ENCODE measurements at regions of chr5 and their contacts with region 1.

Region 1: GRCh38 chr5:80466669-80467485 is 21.0 kb upstream of the FAM151B start:
- DNase-seq: peak; percentile 71
- H3K27ac ChIP-seq: no peak overlapping the region
- CTCF ChIP-seq: no peak

Region 2: DNA sequence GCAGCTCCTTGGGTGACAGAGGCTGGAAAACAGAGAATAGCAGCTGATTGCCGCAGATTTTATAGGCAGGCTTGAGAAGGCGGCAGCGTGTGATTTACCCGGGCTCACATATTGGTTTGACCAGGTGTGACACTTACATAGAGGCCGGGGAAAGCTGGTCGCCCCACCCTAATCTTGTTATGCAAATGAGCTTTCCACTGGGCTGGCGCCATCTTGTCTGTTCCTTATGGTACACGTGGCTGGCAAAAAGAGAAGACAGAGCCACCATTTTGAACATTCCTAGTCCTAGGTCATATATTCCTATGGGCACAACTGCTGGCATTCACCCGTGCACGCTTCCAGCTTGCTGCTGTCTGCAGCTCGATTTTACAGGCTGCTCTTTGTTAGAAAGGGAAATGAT is 158.4 kb before region 1 on chr5:
- CTCF ChIA-PET with region 1: no interaction called
- POLR2A ChIA-PET with region 1: no interaction called
- DNase-seq: no peak
- H3K27ac ChIP-seq: no peak overlapping the region
- CTCF ChIP-seq: no peak

Region 3: DNA sequence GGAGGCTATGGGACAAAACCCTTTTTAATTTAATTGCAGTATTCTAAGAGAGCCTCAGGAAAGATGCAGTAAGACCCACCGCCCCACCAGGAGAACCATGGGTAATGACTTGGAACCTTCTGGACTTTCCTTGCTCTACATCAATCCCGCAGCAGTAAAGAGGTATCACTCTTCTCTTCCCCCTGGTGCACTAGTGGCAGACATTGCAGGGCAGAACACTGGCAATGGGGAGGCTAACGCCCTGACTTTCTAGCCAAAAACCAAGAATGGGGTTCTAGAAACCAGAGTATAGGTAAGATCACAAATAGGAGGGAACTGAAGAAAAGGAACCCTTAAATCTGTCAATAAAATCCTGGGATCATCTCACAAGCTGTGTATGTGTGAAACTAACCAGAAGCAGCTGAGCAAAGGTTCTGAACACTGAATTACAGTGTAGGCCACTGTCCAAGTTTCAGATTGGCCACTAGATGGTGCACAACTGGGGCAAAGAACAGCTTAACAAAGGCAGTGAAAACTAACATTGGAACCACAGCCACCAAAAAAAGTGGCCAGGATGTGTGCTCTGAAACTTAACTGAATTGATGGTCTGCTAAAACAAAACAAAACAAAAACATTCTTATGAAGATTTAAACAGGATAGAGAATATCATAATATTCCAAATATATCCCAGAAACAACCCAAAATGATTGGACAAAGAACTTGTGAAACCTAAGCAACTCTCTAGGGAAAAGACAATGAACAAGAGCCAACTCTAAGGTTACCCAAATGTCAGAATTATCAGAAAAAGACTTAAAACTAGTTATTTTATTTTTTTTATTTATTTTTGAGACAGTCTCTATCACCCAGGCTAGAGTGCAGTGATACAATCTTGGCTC is 14.4 kb after region 1 on chr5:
- CTCF ChIA-PET with region 1: interaction called, 10 read pairs
- POLR2A ChIA-PET with region 1: no interaction called
- DNase-seq: peak; percentile 62
- H3K27ac ChIP-seq: no peak overlapping the region
- CTCF ChIP-seq: peak; percentile 75

Measured in RWPE1 (cell line).